ENCODE measurements at regions of chr2 and their contacts with region 1.

Region 1: DNA sequence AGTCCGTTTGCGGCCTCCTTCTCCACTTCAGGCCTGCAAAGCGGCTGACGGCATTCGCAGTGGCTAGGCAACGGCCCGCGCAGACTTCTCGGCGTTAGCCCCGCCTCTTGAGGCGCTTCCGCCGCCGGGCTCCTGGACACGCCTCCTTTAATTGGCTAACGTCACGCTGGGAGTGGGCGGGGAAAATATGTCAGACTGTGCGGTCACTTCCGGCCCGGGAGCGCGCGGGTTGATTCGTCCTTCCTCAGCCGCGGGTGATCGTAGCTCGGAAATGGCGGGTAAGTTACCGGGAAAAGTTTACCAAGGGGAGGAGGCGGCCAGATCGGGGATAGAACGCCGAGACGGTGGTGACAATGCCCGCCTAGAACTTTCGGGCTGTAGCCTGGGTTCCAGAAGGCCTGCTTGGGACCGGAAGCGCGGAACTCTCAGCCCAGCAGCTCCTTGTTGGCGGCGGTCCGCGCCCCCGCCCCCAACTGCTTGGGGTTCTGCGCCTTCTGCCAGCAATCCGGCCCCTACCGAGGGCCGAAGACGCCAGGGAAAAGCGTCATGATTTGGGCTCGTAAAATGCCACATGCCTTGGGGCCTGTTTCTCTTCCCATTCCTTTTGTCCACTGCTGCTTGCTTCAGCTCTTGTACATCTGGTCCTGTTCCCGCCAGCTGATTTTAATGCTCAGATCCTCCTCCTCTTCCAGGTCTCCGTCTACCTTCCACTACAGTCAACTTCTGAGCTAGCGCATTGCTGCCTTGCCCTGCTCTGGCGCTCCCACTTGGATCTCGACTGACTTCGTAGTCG is at the start of gene HAT1:
- DNase-seq: peak; percentile 97 to 99 (median 98)
- H3K4me3 ChIP-seq: peak within 1 kb of the TSS; percentile 89
- H3K27ac ChIP-seq: peak within 1 kb of the TSS; percentile 82 to 91
- H3K4me1 ChIP-seq: peaks cover 7% of the 10 kb centered on the region
- H3K27me3 ChIP-seq: no peaks in the 10 kb centered on the region
- CTCF ChIP-seq: no peak
- EP300 ChIP-seq: peak; percentile 34
- POLR2A ChIP-seq: peak; percentile 75
- total RNA-seq, gene HAT1: 22.7 to 46.1 (median 35.2) TPM

Region 2: GRCh38 chr2:172052000-172052983 is 129.9 kb after region 1 on chr2:
- intact Hi-C with region 1: no loop called
- DNase-seq: no peak
- H3K4me3 ChIP-seq: no peak overlapping the region
- H3K27ac ChIP-seq: no peak overlapping the region
- H3K4me1 ChIP-seq: peaks cover 6% of the 10 kb centered on the region
- H3K27me3 ChIP-seq: no peaks in the 10 kb centered on the region
- CTCF ChIP-seq: no peak
- EP300 ChIP-seq: no peak
- POLR2A ChIP-seq: no peak

Region 3: GRCh38 chr2:172084734-172085459 is 162.5 kb after region 1 on chr2:
- intact Hi-C with region 1: loop called in 2 of 4 experiments (anchors 10 kb)
- DNase-seq: peak in 3 of 5 donors; percentile 41 to 64 (median 56)
- H3K4me3 ChIP-seq: peak overlapping the region; percentile 25
- H3K27ac ChIP-seq: no peak overlapping the region
- H3K4me1 ChIP-seq: peaks cover 6% of the 10 kb centered on the region
- H3K27me3 ChIP-seq: peaks cover 39% of the 10 kb centered on the region
- CTCF ChIP-seq: no peak
- EP300 ChIP-seq: no peak
- POLR2A ChIP-seq: no peak

Measured in ovary (tissue), 10 donors.